Activated B cell treated with CpG ODN at 0.5 μM for 24 hours (primary cell): ENCODE measurements at regions of chr19 and their contacts with region 1.

Region 1: GRCh38 chr19:14603990-14604387 is 21.1 kb downstream of the CLEC17A start:
- DNase-seq: peak; percentile 39
- ATAC-seq: peak; percentile 88
- H3K4me3 Mint-ChIP-seq: peak overlapping the region; percentile 72
- H3K27ac Mint-ChIP-seq: peak overlapping the region; percentile 93
- H3K4me1 Mint-ChIP-seq: peaks cover 62% of the 10 kb centered on the region
- H3K27me3 Mint-ChIP-seq: no peaks in the 10 kb centered on the region
- CTCF ChIP-seq: no peak

Region 2: DNA sequence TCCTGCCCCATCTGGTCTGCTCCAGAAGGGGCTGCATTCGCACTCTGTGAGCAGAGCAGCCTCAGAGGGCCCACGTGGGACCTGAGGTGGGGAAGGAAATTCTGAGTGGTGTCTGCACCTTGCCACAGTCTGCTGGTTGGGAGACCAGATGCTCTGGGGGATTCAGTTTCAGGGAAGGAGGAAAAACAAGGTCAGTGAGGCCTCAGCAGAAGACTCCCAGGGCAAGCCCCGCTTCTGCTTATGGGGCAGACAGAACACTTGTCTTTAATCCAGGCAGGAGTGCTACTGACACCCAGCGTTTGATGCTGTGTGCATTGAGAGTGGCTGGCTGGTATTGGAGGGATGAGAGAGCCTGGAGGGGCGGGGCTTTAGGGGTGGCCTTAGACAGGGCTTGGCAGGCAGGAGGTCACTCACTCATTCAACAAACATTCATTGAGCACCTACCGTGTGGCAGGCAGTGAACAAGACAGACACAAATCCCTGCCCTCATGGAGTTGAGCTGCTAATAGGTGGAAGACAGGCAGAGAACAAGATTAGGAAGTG is 26.0 kb before region 1 on chr19:
- CTCF ChIA-PET with region 1: interaction called, 22 read pairs
- POLR2A ChIA-PET with region 1: interaction called, 47 read pairs
- intact Hi-C with region 1: loop called (anchors 1 kb)
- DNase-seq: peak; percentile 52
- ATAC-seq: peak; percentile 59
- H3K4me3 Mint-ChIP-seq: peak overlapping the region; percentile 71
- H3K27ac Mint-ChIP-seq: peak overlapping the region; percentile 75
- H3K4me1 Mint-ChIP-seq: peaks cover 78% of the 10 kb centered on the region
- H3K27me3 Mint-ChIP-seq: no peaks in the 10 kb centered on the region
- CTCF ChIP-seq: no peak

Region 3: GRCh38 chr19:14674764-14675163 is 70.8 kb after region 1 on chr19 and contains the start of gene ADGRE3:
- CTCF ChIA-PET with region 1: no interaction called
- POLR2A ChIA-PET with region 1: interaction called, 7 read pairs
- intact Hi-C with region 1: loop called (anchors 2 kb)
- DNase-seq: no peak
- ATAC-seq: peak; percentile 70
- H3K4me3 Mint-ChIP-seq: peak within 1 kb of the TSS; percentile 49
- H3K27ac Mint-ChIP-seq: peak within 1 kb of the TSS; percentile 78
- H3K4me1 Mint-ChIP-seq: peaks cover 32% of the 10 kb centered on the region
- H3K27me3 Mint-ChIP-seq: no peaks in the 10 kb centered on the region
- CTCF ChIP-seq: no peak
- total RNA-seq, gene ADGRE3: not detected in 2 replicates